Endothelial cell of umbilical vein (primary cell): ENCODE measurements at regions of chr17 and their contacts with region 1.

Region 1: GRCh38 chr17:60468371-60468770 is 46.1 kb downstream of the CHCT1 start:
- DNase-seq: peak; percentile 87
- H3K4me3 ChIP-seq: no peak overlapping the region
- H3K27ac ChIP-seq: peak overlapping the region; percentile 67
- H3K4me1 ChIP-seq: peaks cover 28% of the 10 kb centered on the region
- H3K27me3 ChIP-seq: no peaks in the 10 kb centered on the region
- CTCF ChIP-seq: no peak
- POLR2A ChIP-seq: peak; percentile 37

Region 2: DNA sequence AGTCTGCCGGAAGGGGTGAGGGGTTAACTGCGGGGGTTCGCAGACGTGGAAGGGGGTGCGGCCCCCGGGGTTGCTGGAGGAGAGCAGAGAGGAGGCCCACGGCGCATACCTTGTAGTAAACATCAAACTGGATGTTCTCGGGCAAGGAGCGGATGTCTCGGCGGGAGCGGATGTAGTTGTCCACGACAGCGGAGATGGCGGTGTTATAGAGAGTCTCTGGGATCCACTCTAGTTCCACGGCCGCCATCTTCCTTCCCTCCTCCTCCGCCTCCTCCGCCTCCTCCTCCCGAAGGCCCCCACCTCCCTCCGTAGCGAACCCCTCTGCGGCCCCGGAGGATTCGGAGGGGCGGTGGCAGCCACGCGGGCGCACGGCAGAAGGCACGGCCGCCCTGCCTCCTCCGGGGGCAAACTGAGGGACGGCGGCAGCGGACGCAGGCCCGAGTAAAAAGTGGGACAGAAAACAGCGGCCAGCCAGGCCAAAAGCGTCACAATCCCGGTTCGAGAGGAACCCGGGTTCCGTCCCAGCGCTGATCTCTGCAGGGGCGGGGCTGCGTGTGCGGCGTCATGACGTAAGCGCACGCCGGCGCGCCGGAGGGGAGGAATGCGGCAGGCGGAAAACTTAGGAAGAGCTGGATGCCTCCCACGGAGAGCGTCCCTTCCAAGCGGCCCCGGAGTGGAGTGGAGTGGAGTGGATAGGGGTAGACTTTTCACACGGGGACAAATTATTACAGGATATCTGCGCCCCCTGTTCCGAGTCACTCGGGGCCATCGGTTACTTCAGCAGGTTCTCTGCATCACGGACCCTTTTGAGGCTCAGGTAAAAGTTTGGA is 57.5 kb after region 1 on chr17 and contains the start of gene APPBP2:
- CTCF ChIA-PET with region 1: interaction called, 3 read pairs
- POLR2A ChIA-PET with region 1: no interaction called
- dilution Hi-C with region 1: no loop called
- intact Hi-C with region 1: loop called (anchors 1 kb)
- DNase-seq: peak; percentile 90
- H3K4me3 ChIP-seq: peak within 1 kb of the TSS; percentile 71 to 94 (median 91)
- H3K27ac ChIP-seq: peak within 1 kb of the TSS; percentile 86
- H3K4me1 ChIP-seq: peaks cover 11% of the 10 kb centered on the region
- H3K27me3 ChIP-seq: no peaks in the 10 kb centered on the region
- CTCF ChIP-seq: no peak
- POLR2A ChIP-seq: peak; percentile 97
- total RNA-seq, gene APPBP2: 42.0 and 49.1 TPM in 2 replicates

Region 3: DNA sequence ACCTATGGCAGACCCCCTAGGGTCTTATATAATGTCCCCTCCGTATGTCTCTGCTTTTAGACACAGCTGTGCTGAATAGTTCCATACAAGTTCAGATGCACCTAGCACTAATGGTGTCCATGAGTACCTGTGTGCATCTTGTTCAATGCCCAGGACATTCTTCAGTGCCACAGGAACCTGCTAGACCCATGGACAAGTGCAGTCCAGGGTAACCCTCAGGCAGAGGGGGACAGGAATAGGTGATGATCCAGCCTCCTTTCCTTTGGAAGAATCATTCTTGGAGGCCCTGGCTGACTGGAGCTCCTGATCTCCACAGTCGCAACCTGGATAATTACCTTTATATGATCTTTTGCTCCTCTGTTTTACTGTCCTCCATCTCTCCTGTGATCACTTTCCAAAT is 103.2 kb after region 1 on chr17:
- CTCF ChIA-PET with region 1: interaction called, 7 read pairs
- POLR2A ChIA-PET with region 1: no interaction called
- dilution Hi-C with region 1: no loop called
- intact Hi-C with region 1: loop called (anchors 2 kb)
- DNase-seq: no peak
- H3K4me3 ChIP-seq: no peak overlapping the region
- H3K27ac ChIP-seq: peak overlapping the region; percentile 73
- H3K4me1 ChIP-seq: peaks cover 42% of the 10 kb centered on the region
- H3K27me3 ChIP-seq: no peaks in the 10 kb centered on the region
- CTCF ChIP-seq: no peak
- POLR2A ChIP-seq: no peak